Activated CD4-positive, alpha-beta memory T cell treated with anti-CD3 and anti-CD28 coated beads for 36 hours (primary cell): ENCODE measurements at regions of chr1 and their contacts with region 1.

Region 1: DNA sequence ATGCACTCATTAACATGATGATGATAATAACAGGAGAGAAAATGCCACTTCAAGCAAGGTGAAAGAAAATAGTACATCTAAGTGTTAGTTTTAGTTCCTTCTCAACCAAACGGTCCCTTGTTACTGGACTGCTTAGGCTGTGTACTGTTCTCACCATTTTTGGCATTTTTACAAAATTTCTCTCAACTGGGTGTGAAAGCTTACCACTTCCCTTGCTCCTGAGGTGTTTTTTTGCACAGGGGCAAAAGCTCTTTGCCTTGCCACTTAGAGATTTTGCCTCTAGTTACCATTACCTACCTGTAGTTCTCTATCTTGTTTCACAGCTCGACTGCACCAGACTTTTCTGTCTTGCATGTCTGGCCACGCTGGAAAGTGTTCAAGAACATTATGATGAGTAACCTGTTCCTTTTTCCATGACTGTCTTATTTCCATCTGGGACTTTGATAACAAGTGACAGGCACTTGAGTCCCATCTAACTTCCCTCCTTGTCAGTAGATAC is 10.7 kb downstream of the NEK7 start:
- DNase-seq: peak; percentile 33
- H3K4me3 Mint-ChIP-seq: peak overlapping the region; percentile 48
- H3K27ac Mint-ChIP-seq: peak overlapping the region; percentile 92
- H3K4me1 Mint-ChIP-seq: peaks cover 82% of the 10 kb centered on the region
- H3K27me3 Mint-ChIP-seq: no peaks in the 10 kb centered on the region

Region 2: GRCh38 chr1:197761621-197762020 is 405.9 kb before region 1 on chr1:
- CTCF ChIA-PET with region 1: no interaction called
- POLR2A ChIA-PET with region 1: no interaction called
- intact Hi-C with region 1: no loop called
- DNase-seq: no peak
- H3K4me3 Mint-ChIP-seq: no peak overlapping the region
- H3K27ac Mint-ChIP-seq: no peak overlapping the region
- H3K4me1 Mint-ChIP-seq: peaks cover 49% of the 10 kb centered on the region
- H3K27me3 Mint-ChIP-seq: no peaks in the 10 kb centered on the region

Region 3: DNA sequence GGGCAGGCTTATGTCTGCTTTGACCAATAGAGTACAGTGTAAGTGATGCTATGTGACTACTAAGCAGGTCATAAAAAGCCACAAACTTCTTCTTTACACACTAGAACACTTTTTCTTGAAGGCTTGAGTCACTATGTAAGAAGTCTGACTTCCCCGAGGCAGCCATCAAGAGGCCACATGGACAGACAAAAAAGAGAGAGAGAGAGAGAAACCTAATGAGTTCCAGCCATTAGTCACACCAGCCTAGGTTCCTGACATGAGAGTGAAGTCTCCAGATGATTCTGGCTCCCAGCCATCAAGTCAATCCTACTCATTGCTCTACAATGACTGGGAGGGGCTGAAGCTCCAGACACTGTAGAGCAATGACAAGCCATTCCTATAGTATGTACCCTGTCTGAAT is 149.0 kb before region 1 on chr1:
- CTCF ChIA-PET with region 1: no interaction called
- POLR2A ChIA-PET with region 1: no interaction called
- intact Hi-C with region 1: no loop called
- DNase-seq: no peak
- H3K4me3 Mint-ChIP-seq: no peak overlapping the region
- H3K27ac Mint-ChIP-seq: no peak overlapping the region
- H3K4me1 Mint-ChIP-seq: no peaks in the 10 kb centered on the region
- H3K27me3 Mint-ChIP-seq: peaks cover under 1% of the 10 kb centered on the region

Region 4: GRCh38 chr1:198187973-198188588 is 20.6 kb after region 1 on chr1:
- CTCF ChIA-PET with region 1: interaction called, 4 read pairs
- POLR2A ChIA-PET with region 1: interaction called, 3 read pairs
- intact Hi-C with region 1: loop called (anchors 1 kb)
- DNase-seq: no peak
- H3K4me3 Mint-ChIP-seq: peak overlapping the region; percentile 57
- H3K27ac Mint-ChIP-seq: peak overlapping the region; percentile 78
- H3K4me1 Mint-ChIP-seq: peaks cover 77% of the 10 kb centered on the region
- H3K27me3 Mint-ChIP-seq: no peaks in the 10 kb centered on the region

Region 5: DNA sequence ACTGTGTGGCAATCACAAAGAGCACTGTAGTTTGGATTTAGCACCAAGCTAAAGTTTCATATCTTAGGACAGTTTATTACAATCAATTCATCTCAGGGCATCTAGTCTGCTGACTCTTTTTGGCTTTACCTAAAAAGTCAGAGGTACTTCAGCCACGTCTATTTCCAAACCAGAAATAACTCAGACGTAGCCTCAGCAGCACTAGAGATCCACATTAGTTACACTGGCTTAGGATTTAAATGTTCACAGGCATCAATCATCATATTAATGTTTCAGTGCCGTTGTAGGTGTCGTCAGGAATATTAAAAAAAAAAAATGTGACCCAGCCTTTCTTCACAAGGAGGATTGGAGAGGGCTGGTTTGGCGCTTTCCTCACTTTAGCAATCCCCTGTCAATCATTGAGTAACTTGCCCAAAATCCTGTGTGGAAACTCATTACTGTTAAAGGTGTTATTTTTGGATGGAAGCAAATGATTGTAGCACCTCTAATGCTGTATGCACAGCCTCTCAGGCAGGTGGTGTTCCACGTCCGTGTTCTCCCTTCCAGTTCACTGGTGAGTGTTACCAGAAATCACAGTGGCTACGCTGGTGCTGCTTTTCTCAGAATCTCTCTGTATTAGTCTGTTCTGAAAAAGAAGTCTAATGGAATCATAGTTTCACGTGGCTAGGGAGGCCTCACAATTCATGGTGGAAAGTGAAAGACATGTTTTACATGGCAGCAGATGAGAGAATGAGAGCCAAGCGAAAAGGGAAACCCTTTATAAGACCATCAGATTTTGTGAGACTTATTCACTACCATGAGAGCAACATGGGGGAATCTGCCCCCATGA is 34.7 kb after region 1 on chr1:
- CTCF ChIA-PET with region 1: no interaction called
- POLR2A ChIA-PET with region 1: no interaction called
- intact Hi-C with region 1: loop called (anchors 1 kb)
- DNase-seq: peak; percentile 75
- H3K4me3 Mint-ChIP-seq: peak overlapping the region; percentile 40
- H3K27ac Mint-ChIP-seq: peak overlapping the region; percentile 75
- H3K4me1 Mint-ChIP-seq: peaks cover 75% of the 10 kb centered on the region
- H3K27me3 Mint-ChIP-seq: no peaks in the 10 kb centered on the region

Region 6: GRCh38 chr1:198228913-198229312 is 61.4 kb after region 1 on chr1:
- CTCF ChIA-PET with region 1: no interaction called
- POLR2A ChIA-PET with region 1: no interaction called
- intact Hi-C with region 1: no loop called
- DNase-seq: no peak
- H3K4me3 Mint-ChIP-seq: no peak overlapping the region
- H3K27ac Mint-ChIP-seq: no peak overlapping the region
- H3K4me1 Mint-ChIP-seq: peaks cover 18% of the 10 kb centered on the region
- H3K27me3 Mint-ChIP-seq: no peaks in the 10 kb centered on the region